ENCODE measurements at regions of chr2 and their contacts with region 1.

Region 1: GRCh38 chr2:182372661-182373060 is 54.2 kb downstream of the PDE1A start:
- DNase-seq: peak; percentile 79
- H3K4me3 ChIP-seq: no peak overlapping the region
- H3K27ac ChIP-seq: peak overlapping the region; percentile 67
- H3K4me1 ChIP-seq: peaks cover 19% of the 10 kb centered on the region
- H3K27me3 ChIP-seq: no peaks in the 10 kb centered on the region
- CTCF ChIP-seq: no peak
- POLR2A ChIP-seq: no peak

Region 2: GRCh38 chr2:181916726-181917718 is 455.6 kb before region 1 on chr2:
- CTCF ChIA-PET with region 1: no interaction called
- POLR2A ChIA-PET with region 1: no interaction called
- dilution Hi-C with region 1: no loop called
- intact Hi-C with region 1: no loop called
- DNase-seq: peak; percentile 79
- H3K4me3 ChIP-seq: no peak overlapping the region
- H3K27ac ChIP-seq: peak overlapping the region; percentile 14
- H3K4me1 ChIP-seq: peaks cover 38% of the 10 kb centered on the region
- H3K27me3 ChIP-seq: no peaks in the 10 kb centered on the region
- CTCF ChIP-seq: no peak
- POLR2A ChIP-seq: no peak

Region 3: GRCh38 chr2:182280118-182280517 is 92.5 kb before region 1 on chr2:
- CTCF ChIA-PET with region 1: no interaction called
- POLR2A ChIA-PET with region 1: no interaction called
- dilution Hi-C with region 1: no loop called
- intact Hi-C with region 1: loop called (anchors 2 kb)
- DNase-seq: peak; percentile 65
- H3K4me3 ChIP-seq: no peak overlapping the region
- H3K27ac ChIP-seq: no peak overlapping the region
- H3K4me1 ChIP-seq: peaks cover 17% of the 10 kb centered on the region
- H3K27me3 ChIP-seq: no peaks in the 10 kb centered on the region
- CTCF ChIP-seq: no peak
- POLR2A ChIP-seq: no peak

Region 4: GRCh38 chr2:182503886-182504285 is 131.2 kb after region 1 on chr2:
- CTCF ChIA-PET with region 1: no interaction called
- POLR2A ChIA-PET with region 1: no interaction called
- dilution Hi-C with region 1: no loop called
- intact Hi-C with region 1: no loop called
- DNase-seq: no peak
- H3K4me3 ChIP-seq: no peak overlapping the region
- H3K27ac ChIP-seq: no peak overlapping the region
- H3K4me1 ChIP-seq: no peaks in the 10 kb centered on the region
- H3K27me3 ChIP-seq: no peaks in the 10 kb centered on the region
- CTCF ChIP-seq: no peak
- POLR2A ChIP-seq: no peak